ENCODE measurements at regions of chr13 and their contacts with region 1.

Region 1: DNA sequence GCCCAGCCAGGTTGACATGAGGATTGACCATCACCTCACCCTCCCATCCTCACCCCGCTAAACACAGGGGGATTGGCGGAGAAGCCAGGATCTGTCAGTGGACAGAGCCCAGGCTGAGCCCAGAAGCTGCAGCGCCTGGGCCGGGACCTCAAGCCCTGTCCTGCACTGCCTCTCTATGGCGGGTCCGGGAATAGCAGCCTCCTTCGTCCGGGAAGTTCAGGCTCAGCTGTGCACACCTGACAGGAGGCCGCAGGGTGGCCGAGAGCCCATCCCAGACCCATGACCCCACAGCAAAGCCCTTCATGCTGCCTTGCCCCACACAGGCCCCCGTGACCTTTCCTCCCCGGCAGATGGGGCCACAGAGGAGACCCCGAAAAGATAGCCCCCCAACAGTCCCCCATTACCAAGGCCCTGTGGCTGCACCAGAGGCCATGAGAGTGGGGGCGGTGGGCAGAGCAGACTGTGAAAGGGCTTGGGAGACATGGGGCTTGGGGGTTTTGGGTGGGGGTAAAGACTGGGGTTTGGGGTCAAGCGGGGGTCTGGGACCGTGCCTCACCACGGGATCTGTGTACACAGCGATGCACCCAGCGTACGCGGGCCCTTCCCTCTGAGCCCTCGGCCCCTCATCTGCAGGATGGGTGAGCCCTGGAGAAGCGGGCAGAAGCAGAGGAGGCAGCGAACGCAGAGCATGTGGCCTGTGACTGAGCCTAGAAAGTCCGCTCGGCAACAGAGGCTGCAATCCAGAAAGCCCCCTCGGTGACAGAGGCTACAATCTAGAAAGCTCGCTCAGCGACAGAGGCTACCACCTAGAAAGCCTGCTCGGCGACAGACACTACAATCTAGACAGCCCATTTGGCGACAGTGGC is 68.1 kb downstream of the SPACA7 start:
- DNase-seq: no peak
- H3K4me3 ChIP-seq: no peak overlapping the region
- H3K27ac ChIP-seq: no peak overlapping the region
- H3K4me1 ChIP-seq: no peaks in the 10 kb centered on the region
- H3K27me3 ChIP-seq: no peaks in the 10 kb centered on the region
- CTCF ChIP-seq: peak; percentile 30 to 59 (median 34)

Region 2: GRCh38 chr13:111474136-111475002 is 969.9 kb before region 1 on chr13:
- intact Hi-C with region 1: loop called (anchors 10 kb)
- DNase-seq: no peak
- H3K4me3 ChIP-seq: no peak overlapping the region
- H3K27ac ChIP-seq: no peak overlapping the region
- H3K4me1 ChIP-seq: no peaks in the 10 kb centered on the region
- H3K27me3 ChIP-seq: no peaks in the 10 kb centered on the region
- CTCF ChIP-seq: peak in 1 of 3 experiments; percentile 49

Region 3: DNA sequence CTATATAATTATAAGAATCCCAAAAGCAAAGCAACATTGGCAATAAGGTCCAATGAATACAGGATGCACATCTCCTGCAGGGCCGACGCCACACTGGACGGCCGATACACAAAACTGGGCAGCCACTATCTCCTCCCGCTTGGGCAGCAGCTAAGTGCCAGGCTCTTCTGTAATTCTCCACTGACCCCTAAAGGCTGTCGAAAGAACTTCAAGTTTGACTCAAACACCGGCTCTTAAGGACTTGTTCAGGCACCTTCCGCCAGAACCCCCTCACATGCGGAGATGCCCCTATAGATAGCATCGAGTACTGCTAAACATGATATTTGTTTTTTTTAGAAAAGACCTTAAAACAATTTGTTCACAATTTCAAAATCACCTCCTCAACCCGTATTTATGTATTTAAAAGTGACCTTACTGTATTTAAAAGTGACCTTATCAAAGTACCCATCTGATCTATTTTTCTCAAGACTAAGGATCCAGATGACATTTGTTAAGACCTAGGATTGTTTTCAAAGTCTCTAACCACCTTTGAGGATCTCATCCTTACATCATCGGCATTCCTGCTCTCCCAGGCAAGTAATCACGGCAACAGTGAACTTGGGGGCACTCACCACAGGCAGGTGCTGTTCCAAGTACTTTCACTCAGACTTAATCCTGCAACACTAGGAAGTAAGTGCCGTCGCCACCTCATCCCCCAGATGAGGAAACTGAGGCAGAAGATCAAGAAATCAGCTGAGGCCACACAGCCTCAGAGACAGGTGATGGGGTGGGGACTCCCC is 66.0 kb after region 1 on chr13:
- intact Hi-C with region 1: no loop called
- DNase-seq: no peak
- H3K4me3 ChIP-seq: no peak overlapping the region
- H3K27ac ChIP-seq: no peak overlapping the region
- H3K4me1 ChIP-seq: no peaks in the 10 kb centered on the region
- H3K27me3 ChIP-seq: no peaks in the 10 kb centered on the region
- CTCF ChIP-seq: peak in 2 of 3 experiments; percentile 40 to 47

Measured in ascending aorta (tissue), 2 donors.